CD4-positive, alpha-beta T cell (primary cell): ENCODE measurements at regions of chr17 and their contacts with region 1.

Region 1: DNA sequence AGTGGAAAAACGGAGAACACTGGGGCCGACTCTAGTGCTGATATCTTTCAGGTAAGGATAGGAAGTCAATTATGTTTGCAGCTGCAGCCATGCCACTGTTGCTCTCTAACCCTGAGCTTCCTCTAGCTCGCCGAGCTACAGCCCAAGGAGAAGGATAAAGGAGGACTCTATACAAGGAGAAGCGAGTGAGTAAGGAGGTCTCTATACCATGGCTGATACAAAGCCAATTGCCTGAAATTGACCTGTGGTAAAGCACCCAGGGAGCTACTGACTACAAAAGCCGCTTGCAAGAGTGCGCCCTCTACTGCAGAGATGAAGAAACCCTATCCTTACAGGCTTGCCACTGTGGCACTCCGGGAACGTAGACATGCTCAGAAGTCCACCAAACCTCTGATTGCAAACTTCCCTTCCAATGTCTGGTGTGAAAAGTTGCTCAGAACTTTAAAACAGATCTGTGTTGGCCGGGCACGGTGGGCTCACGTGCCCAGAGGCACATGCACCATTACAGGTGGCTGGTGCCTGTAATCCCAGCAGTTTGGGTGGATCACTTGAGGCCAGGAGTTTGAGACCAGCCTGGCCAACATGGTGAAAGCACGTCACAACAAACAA is 10.8 kb upstream of the SLC46A1 start:
- DNase-seq: peak; percentile 31 to 75 (median 42)
- ATAC-seq: peak; percentile 79
- H3K4me3 ChIP-seq: no peak overlapping the region
- H3K4me3 Mint-ChIP-seq: no peak overlapping the region
- H3K27ac ChIP-seq: no peak overlapping the region
- H3K27ac Mint-ChIP-seq: no peak overlapping the region
- H3K4me1 ChIP-seq: peaks cover 7% of the 10 kb centered on the region
- H3K4me1 Mint-ChIP-seq: peaks cover 7% of the 10 kb centered on the region
- H3K27me3 ChIP-seq: no peaks in the 10 kb centered on the region
- H3K27me3 Mint-ChIP-seq: peaks cover 32% of the 10 kb centered on the region
- CTCF ChIP-seq: peak; percentile 76

Region 2: DNA sequence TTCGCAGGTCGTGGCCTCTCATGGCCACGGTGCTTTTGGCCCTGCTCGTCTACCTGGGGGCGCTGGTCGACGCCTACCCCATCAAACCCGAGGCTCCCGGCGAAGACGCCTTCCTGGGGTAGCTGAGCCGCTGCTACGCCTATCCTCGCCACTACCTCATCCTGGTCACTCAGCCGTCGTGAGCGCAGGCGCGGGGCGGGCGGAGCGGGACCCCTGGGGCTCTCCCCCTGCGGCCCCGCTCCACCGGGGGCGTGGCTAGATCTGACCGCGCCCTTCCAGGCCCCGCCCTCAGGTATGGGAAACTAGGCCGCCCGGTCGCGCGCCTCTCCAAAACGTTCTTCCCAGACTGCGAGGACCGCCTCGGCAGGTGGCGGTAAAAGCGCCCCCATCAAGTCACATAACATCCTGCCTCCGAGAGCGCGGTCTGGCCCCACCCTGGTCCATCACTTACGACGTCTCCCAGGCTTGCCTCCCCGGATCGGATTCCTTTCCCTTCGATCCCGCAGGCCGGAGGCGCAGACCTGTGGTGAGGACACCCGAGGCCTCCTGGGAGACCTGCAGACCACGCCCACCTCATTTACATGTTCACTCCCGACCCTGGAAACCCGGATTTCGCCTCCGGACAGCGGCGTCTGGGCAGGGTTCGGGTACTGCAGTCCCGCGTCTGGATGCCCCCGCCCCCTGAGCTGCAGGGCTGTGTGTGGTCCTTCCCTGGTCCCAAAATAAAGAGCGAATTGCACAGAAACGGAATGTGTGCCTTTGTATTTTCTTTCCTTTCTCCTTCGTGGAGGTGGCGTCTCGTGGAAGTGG is 189.3 kb before region 1 on chr17:
- CTCF ChIA-PET with region 1: interaction called, 8 read pairs
- POLR2A ChIA-PET with region 1: no interaction called
- intact Hi-C with region 1: loop called (anchors 2 to 5 kb)
- DNase-seq: peak in 4 of 14 experiments; percentile 7 to 35 (median 18)
- ATAC-seq: no peak
- H3K4me3 ChIP-seq: peak overlapping the region; percentile 45
- H3K4me3 Mint-ChIP-seq: peak overlapping the region; percentile 73
- H3K27ac ChIP-seq: no peak overlapping the region
- H3K27ac Mint-ChIP-seq: no peak overlapping the region
- H3K4me1 ChIP-seq: peaks cover 15% of the 10 kb centered on the region
- H3K4me1 Mint-ChIP-seq: peaks cover 11% of the 10 kb centered on the region
- H3K27me3 ChIP-seq: peaks cover 42 to 46% of the 10 kb centered on the region in 2 experiments
- H3K27me3 Mint-ChIP-seq: peaks cover 55% of the 10 kb centered on the region
- CTCF ChIP-seq: no peak

Region 3: GRCh38 chr17:28394717-28395116 is 22.1 kb before region 1 on chr17:
- CTCF ChIA-PET with region 1: no interaction called
- POLR2A ChIA-PET with region 1: no interaction called
- intact Hi-C with region 1: no loop called
- DNase-seq: no peak
- ATAC-seq: no peak
- H3K4me3 ChIP-seq: no peak overlapping the region
- H3K4me3 Mint-ChIP-seq: no peak overlapping the region
- H3K27ac ChIP-seq: no peak overlapping the region
- H3K27ac Mint-ChIP-seq: no peak overlapping the region
- H3K4me1 ChIP-seq: no peaks in the 10 kb centered on the region
- H3K4me1 Mint-ChIP-seq: no peaks in the 10 kb centered on the region
- H3K27me3 ChIP-seq: no peaks in the 10 kb centered on the region
- H3K27me3 Mint-ChIP-seq: no peaks in the 10 kb centered on the region
- CTCF ChIP-seq: no peak

Region 4: GRCh38 chr17:28405632-28406472 is 11.0 kb before region 1 on chr17 and contains the start of gene SLC46A1:
- CTCF ChIA-PET with region 1: interaction called, 14 read pairs
- POLR2A ChIA-PET with region 1: interaction called, 5 read pairs
- intact Hi-C with region 1: no loop called
- DNase-seq: peak in 11 of 14 experiments; percentile 11 to 53 (median 25)
- ATAC-seq: peak; percentile 70
- H3K4me3 ChIP-seq: peak within 1 kb of the TSS; percentile 59
- H3K4me3 Mint-ChIP-seq: peak within 1 kb of the TSS; percentile 82
- H3K27ac ChIP-seq: no peak within 1 kb of the TSS
- H3K27ac Mint-ChIP-seq: peak within 1 kb of the TSS; percentile 35
- H3K4me1 ChIP-seq: peaks cover 24% of the 10 kb centered on the region
- H3K4me1 Mint-ChIP-seq: peaks cover 5% of the 10 kb centered on the region
- H3K27me3 ChIP-seq: peaks cover 5 to 8% of the 10 kb centered on the region in 2 experiments
- H3K27me3 Mint-ChIP-seq: peaks cover 27% of the 10 kb centered on the region
- CTCF ChIP-seq: no peak
- total RNA-seq, gene SLC46A1: 0.44 to 0.45 TPM

Region 5: GRCh38 chr17:28634206-28634856 is 217.5 kb after region 1 on chr17:
- CTCF ChIA-PET with region 1: no interaction called
- POLR2A ChIA-PET with region 1: no interaction called
- intact Hi-C with region 1: no loop called
- DNase-seq: no peak
- ATAC-seq: no peak
- H3K4me3 ChIP-seq: no peak overlapping the region
- H3K4me3 Mint-ChIP-seq: no peak overlapping the region
- H3K27ac ChIP-seq: no peak overlapping the region
- H3K27ac Mint-ChIP-seq: no peak overlapping the region
- H3K4me1 ChIP-seq: peaks cover 5% of the 10 kb centered on the region
- H3K4me1 Mint-ChIP-seq: peaks cover 16% of the 10 kb centered on the region
- H3K27me3 ChIP-seq: no peaks in the 10 kb centered on the region
- H3K27me3 Mint-ChIP-seq: no peaks in the 10 kb centered on the region
- CTCF ChIP-seq: no peak